ENCODE measurements at regions of chr6 and their contacts with region 1.

Region 1: DNA sequence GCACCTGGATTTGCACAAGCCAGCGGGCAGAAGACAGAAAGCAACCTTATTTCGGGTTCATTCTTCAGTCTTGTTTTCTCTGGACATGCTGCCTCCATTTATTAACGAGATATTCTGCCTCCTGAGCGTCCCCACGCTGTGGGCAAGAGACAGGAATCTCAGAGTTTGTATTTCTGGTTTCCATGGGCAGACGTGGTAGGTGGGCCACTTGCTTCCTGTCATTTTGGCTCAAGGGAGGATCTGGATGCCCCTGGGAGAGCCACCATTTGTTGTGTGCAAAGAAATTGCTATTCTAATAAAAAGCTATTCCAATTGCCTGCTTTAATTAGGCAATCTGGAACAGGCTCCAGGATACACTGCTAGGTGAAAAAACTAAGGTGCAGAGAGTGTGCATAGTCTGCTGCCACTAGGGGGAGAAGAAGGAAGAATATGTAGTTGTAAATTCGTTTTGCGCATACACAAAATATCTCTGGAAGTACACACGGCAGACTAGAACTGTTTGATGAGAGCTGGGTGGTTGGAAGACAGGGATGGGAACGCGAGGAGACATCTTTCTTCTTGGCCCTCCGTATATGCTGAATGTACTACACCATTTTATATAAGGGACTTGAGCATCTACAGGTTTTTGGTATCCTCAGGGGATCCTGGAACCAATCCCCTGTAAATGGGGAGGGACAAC is 30.1 kb upstream of the SLC16A10 start:
- DNase-seq: peak; percentile 52
- ATAC-seq: peak; percentile 94
- H3K4me3 ChIP-seq: no peak overlapping the region
- H3K27ac ChIP-seq: no peak overlapping the region
- H3K4me1 ChIP-seq: no peaks in the 10 kb centered on the region
- H3K27me3 ChIP-seq: peaks cover 18% of the 10 kb centered on the region
- CTCF ChIP-seq: peak; percentile 73
- POLR2A ChIP-seq: no peak
- RAD21 ChIP-seq: peak; percentile 57

Region 2: GRCh38 chr6:111494951-111495635 is 437.9 kb after region 1 on chr6:
- CTCF ChIA-PET with region 1: no interaction called
- POLR2A ChIA-PET with region 1: no interaction called
- dilution Hi-C with region 1: no loop called
- in situ Hi-C with region 1: no loop called
- intact Hi-C with region 1: no loop called
- DNase-seq: no peak
- ATAC-seq: no peak
- H3K4me3 ChIP-seq: no peak overlapping the region
- H3K27ac ChIP-seq: no peak overlapping the region
- H3K4me1 ChIP-seq: peaks cover 6% of the 10 kb centered on the region
- H3K27me3 ChIP-seq: no peaks in the 10 kb centered on the region
- CTCF ChIP-seq: no peak
- POLR2A ChIP-seq: no peak
- RAD21 ChIP-seq: no peak

Region 3: GRCh38 chr6:111591104-111591900 is 534.1 kb after region 1 on chr6:
- CTCF ChIA-PET with region 1: no interaction called
- POLR2A ChIA-PET with region 1: no interaction called
- dilution Hi-C with region 1: no loop called
- in situ Hi-C with region 1: no loop called
- intact Hi-C with region 1: loop called (anchors 5 kb)
- DNase-seq: peak; percentile 100
- ATAC-seq: peak; percentile 89
- H3K4me3 ChIP-seq: no peak overlapping the region
- H3K27ac ChIP-seq: peak overlapping the region; percentile 93
- H3K4me1 ChIP-seq: peaks cover 29% of the 10 kb centered on the region
- H3K27me3 ChIP-seq: no peaks in the 10 kb centered on the region
- CTCF ChIP-seq: no peak
- POLR2A ChIP-seq: peak; percentile 62; the same call in 1 of the 2 replicates
- RAD21 ChIP-seq: peak; percentile 25

Region 4: GRCh38 chr6:111841822-111842221 is 784.6 kb after region 1 on chr6:
- CTCF ChIA-PET with region 1: no interaction called
- POLR2A ChIA-PET with region 1: no interaction called
- dilution Hi-C with region 1: no loop called
- in situ Hi-C with region 1: no loop called
- intact Hi-C with region 1: no loop called
- DNase-seq: peak; percentile 76
- ATAC-seq: peak; percentile 22; the same call in 1 of the 2 replicates
- H3K4me3 ChIP-seq: no peak overlapping the region
- H3K27ac ChIP-seq: peak overlapping the region; percentile 63
- H3K4me1 ChIP-seq: peaks cover 17% of the 10 kb centered on the region
- H3K27me3 ChIP-seq: no peaks in the 10 kb centered on the region
- CTCF ChIP-seq: no peak
- POLR2A ChIP-seq: no peak
- RAD21 ChIP-seq: no peak

Measured in IMR-90 (cell line).